GM10248 (cell line): ENCODE measurements at regions of chrX and their contacts with region 1.

Region 1: DNA sequence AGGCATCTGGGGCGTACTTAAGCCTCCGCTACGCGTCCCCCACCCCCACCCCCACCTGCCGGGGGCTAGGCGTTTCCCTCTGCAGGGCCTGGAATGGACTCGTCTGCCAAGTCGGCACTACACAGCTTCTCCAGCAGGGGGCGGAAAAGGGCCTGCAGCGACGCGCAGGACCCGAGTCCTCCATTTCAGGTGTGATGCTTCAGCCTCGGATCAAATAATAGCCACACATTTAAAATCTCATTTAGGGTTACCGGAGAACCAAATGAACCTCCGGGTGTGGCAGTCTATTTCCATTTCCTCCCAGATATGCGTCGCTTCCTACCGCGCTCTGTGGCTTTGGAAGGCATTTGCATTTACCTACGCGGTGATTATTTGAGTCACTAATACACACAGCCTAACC is 2.9 kb downstream of the PAK3 start:
- DNase-seq: peak; percentile 66
- CTCF ChIP-seq: peak; percentile 64

Region 2: DNA sequence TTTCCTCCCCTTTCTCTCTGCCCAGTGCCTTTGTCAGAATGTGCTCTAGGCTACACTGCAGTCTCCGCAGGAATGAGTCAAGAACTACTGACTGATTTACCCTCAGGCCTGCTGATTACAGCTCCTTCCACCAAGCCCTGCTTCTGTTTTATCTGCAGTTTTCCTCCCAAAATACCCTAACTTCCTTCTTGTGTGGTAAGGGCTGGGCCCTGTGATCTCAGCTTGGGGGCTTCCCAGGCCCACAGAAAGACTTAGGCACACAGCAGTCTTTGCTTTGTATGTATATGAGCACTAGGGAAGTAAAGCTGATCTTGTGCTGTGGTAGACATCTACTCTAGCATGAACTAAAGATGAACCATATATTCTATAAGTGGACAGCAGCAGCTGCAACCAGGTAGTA is 15.9 kb after region 1 on chrX:
- CTCF ChIA-PET with region 1: interaction called, 16 read pairs
- POLR2A ChIA-PET with region 1: no interaction called
- DNase-seq: no peak
- CTCF ChIP-seq: no peak

Region 3: DNA sequence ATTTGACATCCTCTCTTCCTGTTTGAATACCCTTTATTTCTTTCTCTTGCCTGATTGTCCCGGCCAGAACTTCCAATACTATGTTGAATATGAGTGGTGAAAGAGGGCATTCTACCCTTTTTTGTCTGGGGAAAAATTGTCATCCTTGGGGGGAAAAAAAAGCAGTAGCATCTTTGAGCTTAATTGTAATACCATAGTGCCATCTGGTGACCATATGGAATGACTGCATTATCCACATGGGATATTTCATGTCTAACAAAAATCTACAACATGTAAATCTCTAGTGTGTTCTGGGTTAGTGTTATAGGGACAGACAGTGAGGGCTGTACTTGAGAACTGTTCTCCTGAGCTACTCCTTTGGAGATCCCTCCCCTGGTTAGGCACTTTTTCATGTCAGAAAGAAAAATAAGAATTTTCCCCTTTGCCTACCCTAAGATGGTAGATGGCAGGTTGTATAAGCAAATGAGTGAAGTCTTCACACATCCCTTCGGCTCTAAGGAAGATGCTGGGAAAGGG is 145.4 kb after region 1 on chrX:
- CTCF ChIA-PET with region 1: interaction called, 32 read pairs
- POLR2A ChIA-PET with region 1: no interaction called
- DNase-seq: peak; percentile 24
- CTCF ChIP-seq: peak; percentile 37